PC-3 (cell line): ENCODE measurements at regions of chr3 and their contacts with region 1.

Region 1: DNA sequence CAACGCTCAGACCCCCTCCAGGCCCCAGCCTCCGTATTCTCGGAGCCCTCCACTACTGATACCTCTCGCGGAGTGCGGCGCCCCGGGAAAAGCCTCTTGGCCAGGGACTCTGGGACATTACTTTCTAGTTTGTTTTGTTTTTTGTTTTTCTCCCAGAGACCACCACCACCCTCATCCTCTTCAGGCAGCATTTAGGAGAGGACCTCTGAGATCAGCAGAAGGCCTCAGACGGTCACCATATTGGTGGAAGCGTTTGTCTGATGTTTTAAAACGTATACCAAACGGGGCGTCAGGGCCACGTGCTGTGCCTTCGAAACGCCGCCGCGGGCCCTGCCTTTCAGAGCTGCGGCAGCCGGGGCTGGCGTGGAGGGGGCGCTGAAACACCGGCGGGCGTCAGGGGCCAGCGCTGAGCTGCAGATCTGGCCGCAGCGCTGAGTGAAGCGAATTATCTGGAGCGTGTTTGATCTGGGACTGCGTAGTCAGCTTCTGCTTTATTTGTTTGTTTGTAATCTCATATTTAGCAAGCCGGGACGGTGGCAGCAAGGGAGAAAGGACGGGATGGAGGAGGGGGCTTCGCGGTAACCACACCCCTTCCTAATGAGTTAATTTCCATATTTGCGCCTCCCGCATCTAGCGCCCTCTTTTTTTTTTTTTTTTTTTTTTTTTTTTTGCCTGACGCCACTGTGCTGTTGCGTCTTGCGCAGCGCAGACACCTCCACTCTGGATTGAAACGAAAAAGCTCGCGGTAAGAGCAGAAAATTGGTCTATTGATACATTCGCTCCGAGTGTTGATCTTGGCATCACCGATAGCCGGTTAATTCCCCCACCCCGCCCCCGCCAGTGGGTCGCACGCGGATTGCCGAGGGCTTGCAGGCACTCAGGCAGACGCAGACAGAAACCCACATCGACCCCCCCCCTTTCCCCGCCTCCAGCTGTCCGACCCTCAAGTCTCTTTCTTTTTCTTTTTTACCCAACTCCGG is 14.9 kb downstream of the SOX2 start:
- DNase-seq: no peak
- ATAC-seq: no peak
- H3K4me3 ChIP-seq: no peak overlapping the region
- H3K27ac ChIP-seq: no peak overlapping the region
- H3K4me1 ChIP-seq: no peaks in the 10 kb centered on the region
- H3K27me3 ChIP-seq: peaks cover 93% of the 10 kb centered on the region
- CTCF ChIP-seq: no peak

Region 2: GRCh38 chr3:181941250-181941649 is 214.6 kb after region 1 on chr3:
- CTCF ChIA-PET with region 1: no interaction called
- POLR2A ChIA-PET with region 1: no interaction called
- intact Hi-C with region 1: no loop called
- DNase-seq: no peak
- ATAC-seq: no peak
- H3K4me3 ChIP-seq: no peak overlapping the region
- H3K27ac ChIP-seq: no peak overlapping the region
- H3K4me1 ChIP-seq: no peaks in the 10 kb centered on the region
- H3K27me3 ChIP-seq: peaks cover 10% of the 10 kb centered on the region; the same call in 1 of the 2 replicates
- CTCF ChIP-seq: no peak

Region 3: GRCh38 chr3:182005701-182006100 is 279.1 kb after region 1 on chr3:
- CTCF ChIA-PET with region 1: interaction called, 13 read pairs
- POLR2A ChIA-PET with region 1: no interaction called
- intact Hi-C with region 1: no loop called
- DNase-seq: no peak
- ATAC-seq: no peak
- H3K4me3 ChIP-seq: no peak overlapping the region
- H3K27ac ChIP-seq: no peak overlapping the region
- H3K4me1 ChIP-seq: no peaks in the 10 kb centered on the region
- H3K27me3 ChIP-seq: peaks cover 91% of the 10 kb centered on the region
- CTCF ChIP-seq: no peak

Region 4: DNA sequence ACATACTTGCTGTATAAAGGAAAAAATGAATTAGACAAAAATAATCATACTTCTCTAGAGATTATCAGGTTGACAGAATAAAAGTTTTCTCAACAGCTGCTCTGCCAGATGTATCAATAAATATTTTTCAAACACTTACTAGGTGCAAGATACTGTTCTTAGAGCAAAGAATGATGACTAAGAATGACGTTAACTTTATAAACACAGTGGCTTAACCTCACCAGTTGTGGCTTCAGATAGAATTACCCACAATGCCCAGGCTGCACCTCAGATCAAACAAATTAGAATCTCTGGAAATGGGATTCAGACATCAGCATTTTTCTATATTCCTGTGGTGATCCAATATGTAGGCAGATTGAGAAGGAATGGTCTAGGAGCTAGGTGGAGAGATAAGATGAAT is 644.3 kb after region 1 on chr3:
- CTCF ChIA-PET with region 1: no interaction called
- POLR2A ChIA-PET with region 1: interaction called, 16 read pairs
- intact Hi-C with region 1: no loop called
- DNase-seq: peak; percentile 81
- ATAC-seq: peak; percentile 99
- H3K4me3 ChIP-seq: no peak overlapping the region
- H3K27ac ChIP-seq: no peak overlapping the region
- H3K4me1 ChIP-seq: peaks cover 16% of the 10 kb centered on the region
- H3K27me3 ChIP-seq: no peaks in the 10 kb centered on the region
- CTCF ChIP-seq: no peak

Region 5: DNA sequence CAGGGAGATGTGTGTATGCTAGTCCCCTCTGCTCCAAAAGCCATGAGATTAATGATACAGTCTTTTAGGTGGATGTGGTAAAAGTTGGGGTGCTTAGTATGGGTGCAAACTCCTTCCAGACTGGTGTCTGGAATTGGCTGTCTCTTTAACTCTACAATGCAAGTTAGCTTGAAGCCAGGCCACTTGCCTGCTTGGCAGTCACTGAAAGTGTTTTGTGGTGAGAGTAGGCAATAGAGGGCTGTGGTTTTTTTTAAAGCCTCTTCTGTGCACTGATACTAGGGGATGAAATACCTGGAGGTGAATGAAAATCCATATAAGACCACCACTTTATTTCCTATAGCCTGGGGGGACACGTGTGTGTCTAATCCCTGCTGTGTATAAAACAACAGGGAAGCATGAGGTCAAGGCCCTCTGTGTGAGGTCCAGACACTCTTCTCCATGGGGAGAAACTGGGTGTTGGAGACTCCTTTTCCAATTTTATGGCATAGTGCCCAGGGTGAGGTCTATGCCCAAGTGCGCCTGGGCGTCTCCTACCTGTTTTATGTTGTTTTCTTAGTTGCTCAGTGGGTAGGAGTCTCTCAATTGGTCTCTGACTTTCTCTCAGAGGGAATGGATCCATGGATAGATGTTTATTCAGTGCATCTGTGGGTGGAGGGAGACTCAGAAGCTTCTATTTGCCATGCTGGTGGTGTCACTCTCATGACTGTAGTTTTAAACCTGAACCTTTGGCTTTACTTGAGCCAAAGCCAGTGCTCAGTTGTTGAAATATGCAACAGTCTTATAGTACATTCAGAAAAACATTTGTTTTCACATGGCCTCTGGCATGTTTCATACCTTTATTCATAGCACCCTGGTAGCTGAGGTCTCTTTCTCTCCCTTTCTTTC is 738.9 kb after region 1 on chr3:
- CTCF ChIA-PET with region 1: no interaction called
- POLR2A ChIA-PET with region 1: interaction called, 10 read pairs
- intact Hi-C with region 1: no loop called
- DNase-seq: peak; percentile 63
- ATAC-seq: peak; percentile 78
- H3K4me3 ChIP-seq: no peak overlapping the region
- H3K27ac ChIP-seq: no peak overlapping the region
- H3K4me1 ChIP-seq: peaks cover 5% of the 10 kb centered on the region; the same call in 1 of the 2 replicates
- H3K27me3 ChIP-seq: no peaks in the 10 kb centered on the region
- CTCF ChIP-seq: no peak